WTC11 (cell line): ENCODE measurements at regions of chr1 and their contacts with region 1.

Region 1: DNA sequence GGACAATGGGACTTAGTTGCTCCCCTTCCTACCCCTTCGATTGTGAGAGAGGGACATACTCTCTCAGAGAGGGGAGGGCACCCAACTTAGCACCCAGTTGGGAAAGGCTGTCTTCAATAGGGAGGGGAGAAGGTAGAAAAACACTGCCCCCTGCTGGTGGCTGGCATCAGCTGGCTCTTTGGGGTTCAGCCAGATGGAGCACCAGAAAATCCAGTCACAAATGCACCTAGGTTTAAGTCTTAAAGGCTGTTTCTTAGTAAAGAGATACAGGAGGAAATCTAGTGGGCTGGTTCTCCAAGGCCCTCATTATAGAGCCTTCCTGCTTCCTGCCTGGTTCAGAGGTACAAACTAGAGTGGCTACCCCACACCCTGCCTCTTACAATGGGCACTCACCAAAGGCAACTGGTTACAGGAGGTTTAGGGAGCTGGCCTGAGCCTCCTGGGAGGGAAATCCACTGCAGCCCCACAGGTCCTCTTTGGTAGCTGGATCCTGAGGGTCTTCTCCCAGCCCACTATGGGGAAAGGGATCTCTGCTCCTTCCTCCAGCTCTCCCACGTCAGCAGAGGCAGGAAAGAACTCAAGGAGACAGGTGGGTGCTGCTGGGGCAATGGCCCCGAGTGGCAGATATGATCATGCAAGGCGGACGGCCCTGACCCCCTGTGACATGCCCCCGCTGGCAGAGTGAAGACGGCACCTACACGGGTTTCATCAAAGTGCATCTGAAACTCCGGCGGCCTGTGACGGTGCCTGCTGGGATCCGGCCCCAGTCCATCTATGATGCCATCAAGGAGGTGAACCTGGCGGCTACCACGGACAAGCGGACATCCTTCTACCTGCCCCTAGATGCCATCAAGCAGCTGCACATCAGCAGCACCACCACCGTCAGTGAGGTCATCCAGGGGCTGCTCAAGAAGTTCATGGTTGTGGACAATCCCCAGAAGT is 28.3 kb downstream of the EIF2D start:
- DNase-seq: peak; percentile 84
- ATAC-seq: peak; percentile 84
- H3K4me3 Mint-ChIP-seq: no peak overlapping the region
- H3K27ac Mint-ChIP-seq: peak overlapping the region; percentile 79
- H3K4me1 Mint-ChIP-seq: peaks cover 4% of the 10 kb centered on the region
- H3K27me3 Mint-ChIP-seq: no peaks in the 10 kb centered on the region
- CTCF ChIP-seq: peak; percentile 90

Region 2: GRCh38 chr1:206469933-206470691 is 113.9 kb before region 1 on chr1 and contains the start of gene IKBKE:
- CTCF ChIA-PET with region 1: interaction called, 10 read pairs
- POLR2A ChIA-PET with region 1: no interaction called
- DNase-seq: peak; percentile 41
- ATAC-seq: peak; percentile 64
- H3K4me3 Mint-ChIP-seq: peak within 1 kb of the TSS; percentile 69
- H3K27ac Mint-ChIP-seq: peak within 1 kb of the TSS; percentile 41; the same call in 1 of the 2 replicates
- H3K4me1 Mint-ChIP-seq: peaks cover 59% of the 10 kb centered on the region
- H3K27me3 Mint-ChIP-seq: peaks cover 16% of the 10 kb centered on the region
- CTCF ChIP-seq: no peak
- total RNA-seq, gene IKBKE: 7.8 to 8.1 TPM (median 8.0 TPM) in 3 replicates

Region 3: DNA sequence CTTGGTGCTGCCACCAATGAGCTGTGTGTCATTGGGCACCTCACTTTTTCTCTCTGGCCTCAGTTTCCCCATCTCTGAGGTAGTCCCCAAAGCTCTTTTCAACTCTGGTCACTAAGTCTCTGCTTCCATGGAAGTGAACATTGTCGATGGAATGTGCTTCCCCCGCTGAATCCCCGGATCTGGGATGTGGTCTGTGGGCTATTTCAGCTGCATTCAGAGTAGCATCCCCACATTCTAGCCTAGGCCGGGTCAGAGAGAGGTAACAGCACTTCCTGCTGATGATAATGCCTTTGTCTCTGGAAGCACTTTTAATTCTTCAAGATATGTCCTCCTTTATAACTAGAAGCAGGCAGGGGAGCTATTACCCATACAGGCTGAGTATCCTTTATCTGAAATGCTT is 46.8 kb before region 1 on chr1:
- CTCF ChIA-PET with region 1: interaction called, 10 read pairs
- POLR2A ChIA-PET with region 1: no interaction called
- DNase-seq: no peak
- ATAC-seq: peak; percentile 38
- H3K4me3 Mint-ChIP-seq: no peak overlapping the region
- H3K27ac Mint-ChIP-seq: no peak overlapping the region
- H3K4me1 Mint-ChIP-seq: peaks cover 5% of the 10 kb centered on the region
- H3K27me3 Mint-ChIP-seq: no peaks in the 10 kb centered on the region
- CTCF ChIP-seq: no peak

Region 4: GRCh38 chr1:206551986-206552326 is 32.0 kb before region 1 on chr1:
- CTCF ChIA-PET with region 1: interaction called, 95 read pairs
- POLR2A ChIA-PET with region 1: no interaction called
- DNase-seq: no peak
- ATAC-seq: no peak
- H3K4me3 Mint-ChIP-seq: no peak overlapping the region
- H3K27ac Mint-ChIP-seq: no peak overlapping the region
- H3K4me1 Mint-ChIP-seq: peaks cover 14% of the 10 kb centered on the region
- H3K27me3 Mint-ChIP-seq: peaks cover 17% of the 10 kb centered on the region
- CTCF ChIP-seq: no peak

Region 5: DNA sequence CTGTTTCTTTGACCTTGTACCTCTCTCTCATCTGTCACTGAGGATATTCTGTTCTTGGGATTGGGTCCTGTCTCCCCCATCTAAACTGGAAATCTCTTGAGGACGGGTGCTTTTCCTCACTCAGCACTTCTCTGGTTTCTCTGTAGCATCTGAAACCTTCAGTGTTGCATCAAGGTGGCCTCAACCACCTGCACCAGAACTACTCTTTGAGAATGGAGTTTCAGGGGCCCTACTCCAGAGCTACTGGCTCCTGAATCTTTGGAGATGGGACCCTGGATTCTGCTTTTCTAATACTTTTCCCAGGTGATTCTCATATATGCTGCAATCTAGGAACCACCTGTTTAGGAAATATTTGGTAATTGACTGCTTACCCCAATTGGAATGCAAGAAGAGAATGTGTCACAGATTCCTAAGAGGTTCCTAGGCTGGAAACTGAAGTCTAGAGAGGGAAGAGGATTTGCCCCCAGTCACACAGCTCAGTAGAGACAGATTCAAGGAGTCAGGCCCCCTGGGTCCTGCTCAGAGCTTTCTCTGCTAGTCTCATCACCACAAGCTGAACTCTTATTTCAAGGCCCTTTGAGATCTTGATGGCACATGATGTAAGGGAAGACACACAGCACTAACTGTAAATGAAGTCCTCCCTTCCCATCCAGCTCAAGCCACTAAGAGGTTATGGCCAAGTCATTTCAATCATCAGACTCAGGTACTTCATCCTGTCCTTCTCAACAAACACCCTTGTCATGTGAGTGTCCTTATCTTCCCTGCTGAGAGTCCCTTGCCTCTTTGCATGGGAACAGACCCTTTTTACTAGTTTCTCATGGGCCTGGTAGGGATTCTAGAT is 20.4 kb before region 1 on chr1:
- CTCF ChIA-PET with region 1: interaction called, 14 read pairs
- POLR2A ChIA-PET with region 1: no interaction called
- DNase-seq: no peak
- ATAC-seq: no peak
- H3K4me3 Mint-ChIP-seq: no peak overlapping the region
- H3K27ac Mint-ChIP-seq: no peak overlapping the region
- H3K4me1 Mint-ChIP-seq: peaks cover 19% of the 10 kb centered on the region
- H3K27me3 Mint-ChIP-seq: peaks cover 5% of the 10 kb centered on the region
- CTCF ChIP-seq: no peak